ENCODE measurements at regions of chr20 and their contacts with region 1.

Region 1: DNA sequence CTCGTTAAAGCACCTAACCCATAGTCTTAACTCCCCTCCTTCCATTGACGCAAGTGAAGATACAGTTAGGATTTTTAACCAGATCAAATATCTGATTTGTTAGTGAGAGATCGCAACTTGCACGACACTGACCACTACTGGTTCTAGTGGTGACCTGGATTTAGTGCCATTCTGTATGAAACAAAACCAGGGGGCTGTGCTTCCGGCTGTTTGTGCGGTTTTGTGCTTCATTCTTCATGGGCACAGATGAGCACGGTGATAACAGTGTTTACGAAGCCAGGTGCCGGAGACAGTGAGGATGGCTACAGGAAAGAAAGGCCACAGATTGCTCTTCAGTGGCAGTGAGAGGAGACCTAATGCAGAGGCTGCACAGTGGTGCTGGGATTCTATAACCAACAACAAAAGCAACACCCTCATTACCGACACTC is 75.5 kb downstream of the NOL4L start:
- DNase-seq: no peak
- H3K4me3 ChIP-seq: no peak overlapping the region
- H3K27ac ChIP-seq: no peak overlapping the region
- H3K4me1 ChIP-seq: peaks cover 0 to 6% (median 0%) of the 10 kb centered on the region in 4 experiments; a peak in 1 of 7 replicates
- H3K27me3 ChIP-seq: no peaks in the 10 kb centered on the region
- CTCF ChIP-seq: peak in 1 of 3 experiments; percentile 38; a peak in 1 of 4 replicates
- EP300 ChIP-seq: no peak
- POLR2A ChIP-seq: no peak
- RAD21 ChIP-seq: peak in 1 of 2 experiments; percentile 38; a peak in 2 of 4 replicates

Region 2: DNA sequence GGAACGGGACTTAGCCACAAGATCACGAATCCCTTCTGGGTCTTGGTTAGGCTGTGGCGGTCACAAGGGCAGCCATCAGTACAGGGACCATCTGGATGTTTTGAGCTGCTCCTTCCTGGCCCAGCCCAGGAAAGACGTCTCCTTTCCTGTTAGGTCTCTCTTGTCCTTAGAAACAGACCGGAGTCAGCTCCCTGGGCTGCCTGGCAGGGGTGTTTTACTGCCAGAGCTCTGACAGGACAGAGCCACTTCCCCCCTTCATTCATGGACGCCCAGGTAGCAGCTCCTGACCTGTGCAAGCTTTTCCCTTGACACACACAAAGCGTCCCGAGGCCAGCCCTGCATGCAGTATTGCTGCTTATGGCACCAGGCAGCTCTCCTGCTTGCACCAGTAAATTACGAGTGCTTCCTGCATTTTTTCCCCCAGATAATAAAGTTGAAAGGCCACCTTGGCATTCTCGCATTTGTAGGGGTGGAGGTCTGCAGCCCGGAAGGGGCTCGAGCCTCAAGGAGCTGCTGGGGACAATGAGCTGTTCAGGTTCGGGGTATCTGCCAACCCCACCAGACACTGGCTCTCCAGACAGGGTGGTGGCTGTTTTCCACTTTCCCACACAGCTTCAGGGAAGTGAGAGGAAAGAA is 11.9 kb before region 1 on chr20:
- CTCF ChIA-PET with region 1: interaction called, 11 read pairs
- POLR2A ChIA-PET with region 1: interaction called, 4 read pairs
- DNase-seq: no peak
- H3K4me3 ChIP-seq: 0 out of 8 replicates have a peak overlapping the region, but pooled peaks of 1 of the 4 experiments have one; percentile 5
- H3K27ac ChIP-seq: no peak overlapping the region
- H3K4me1 ChIP-seq: peaks cover 0 to 10% (median 10%) of the 10 kb centered on the region in 4 experiments; a peak in 6 of 7 replicates
- H3K27me3 ChIP-seq: no peaks in the 10 kb centered on the region
- CTCF ChIP-seq: no peak
- EP300 ChIP-seq: no peak
- POLR2A ChIP-seq: no peak
- RAD21 ChIP-seq: no peak

Region 3: GRCh38 chr20:32567384-32568178 is 57.9 kb after region 1 on chr20:
- CTCF ChIA-PET with region 1: no interaction called
- POLR2A ChIA-PET with region 1: no interaction called
- DNase-seq: no peak
- H3K4me3 ChIP-seq: no peak overlapping the region
- H3K27ac ChIP-seq: no peak overlapping the region
- H3K4me1 ChIP-seq: peaks cover 0 to 19% (median 11%) of the 10 kb centered on the region in 4 experiments; a peak in 5 of 7 replicates
- H3K27me3 ChIP-seq: no peaks in the 10 kb centered on the region; a peak in 2 of 7 replicates
- CTCF ChIP-seq: no peak
- EP300 ChIP-seq: no peak
- POLR2A ChIP-seq: no peak
- RAD21 ChIP-seq: no peak

Measured in H1 (cell line).